Vagina (tissue), 2 donors: ENCODE measurements at regions of chr9 and their contacts with region 1.

Region 1: DNA sequence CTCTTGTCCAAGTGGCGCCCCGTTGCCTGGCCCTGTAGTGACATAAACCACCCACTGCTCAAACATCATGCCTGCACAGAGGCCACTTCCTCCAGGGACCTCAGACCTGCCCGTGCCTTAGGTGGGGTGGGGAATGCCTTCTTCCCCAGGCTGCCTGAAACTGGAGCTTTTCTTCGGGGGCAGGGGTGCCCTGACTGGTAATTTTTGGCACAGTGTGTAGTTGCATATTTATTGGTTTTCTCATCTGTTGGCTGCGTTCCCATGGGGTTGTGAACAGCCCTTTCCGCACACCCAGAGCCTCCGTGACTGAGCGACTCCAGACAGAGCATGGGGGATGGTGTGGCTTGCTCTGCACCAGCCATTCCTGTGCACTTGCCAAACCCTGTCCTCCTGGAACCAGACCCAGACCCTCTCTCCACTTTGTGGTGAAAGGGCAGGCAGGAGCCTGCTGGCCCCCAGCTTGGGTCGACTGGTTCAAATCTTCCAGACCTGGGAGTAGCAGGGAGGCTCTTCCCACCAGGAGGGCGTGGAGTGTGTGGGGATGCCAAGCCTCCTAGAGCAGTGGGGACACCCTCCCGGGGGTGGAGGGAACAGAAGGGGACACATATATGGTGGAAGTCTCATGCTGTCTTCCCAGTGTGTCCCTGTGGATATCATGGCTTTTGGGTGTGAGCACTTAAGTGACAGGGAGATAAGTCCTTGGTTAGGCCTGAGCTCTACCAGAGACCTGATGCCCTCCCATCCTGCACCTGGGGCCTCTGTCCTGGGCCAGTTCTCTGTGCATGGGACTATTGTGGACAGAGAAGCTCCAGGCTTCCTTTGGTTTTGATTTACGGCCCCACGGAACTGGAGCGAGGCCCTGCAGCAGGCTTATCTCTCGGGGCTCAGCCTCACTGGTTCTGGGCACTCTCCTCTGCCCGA is 39.6 kb downstream of the WNK2 start:
- DNase-seq: no peak
- H3K4me3 ChIP-seq: no peak overlapping the region
- H3K27ac ChIP-seq: no peak overlapping the region
- H3K4me1 ChIP-seq: peaks cover 23% of the 10 kb centered on the region
- H3K27me3 ChIP-seq: no peaks in the 10 kb centered on the region
- CTCF ChIP-seq: no peak
- POLR2A ChIP-seq: no peak

Region 2: GRCh38 chr9:93292664-93293328 is 69.3 kb after region 1 on chr9:
- intact Hi-C with region 1: loop called (anchors 2 kb)
- DNase-seq: no peak
- H3K4me3 ChIP-seq: no peak overlapping the region
- H3K27ac ChIP-seq: no peak overlapping the region
- H3K4me1 ChIP-seq: peaks cover 12% of the 10 kb centered on the region
- H3K27me3 ChIP-seq: no peaks in the 10 kb centered on the region
- CTCF ChIP-seq: no peak
- POLR2A ChIP-seq: no peak